B cell (primary cell): ENCODE measurements at regions of chr15 and their contacts with region 1.

Region 1: GRCh38 chr15:45166834-45167630 is 20.7 kb downstream of the SHF start:
- DNase-seq: peak; percentile 89
- ATAC-seq: peak; percentile 94
- H3K4me3 ChIP-seq: peak overlapping the region; percentile 45 to 84 (median 81)
- H3K4me3 Mint-ChIP-seq: peak overlapping the region; percentile 80
- H3K27ac ChIP-seq: peak overlapping the region; percentile 89 to 96
- H3K27ac Mint-ChIP-seq: peak overlapping the region; percentile 92
- H3K4me1 ChIP-seq: peaks cover 12 to 46% of the 10 kb centered on the region in 2 donors
- H3K4me1 Mint-ChIP-seq: peaks cover 31% of the 10 kb centered on the region
- H3K27me3 ChIP-seq: no peaks in the 10 kb centered on the region
- H3K27me3 Mint-ChIP-seq: no peaks in the 10 kb centered on the region
- CTCF ChIP-seq: peak; percentile 75

Region 2: GRCh38 chr15:44910981-44911625 is 255.9 kb before region 1 on chr15:
- CTCF ChIA-PET with region 1: no interaction called
- POLR2A ChIA-PET with region 1: no interaction called
- intact Hi-C with region 1: no loop called
- DNase-seq: no peak
- ATAC-seq: no peak
- H3K4me3 ChIP-seq: no peak overlapping the region
- H3K4me3 Mint-ChIP-seq: no peak overlapping the region
- H3K27ac ChIP-seq: no peak overlapping the region
- H3K27ac Mint-ChIP-seq: no peak overlapping the region
- H3K4me1 ChIP-seq: no peaks in the 10 kb centered on the region
- H3K4me1 Mint-ChIP-seq: no peaks in the 10 kb centered on the region
- H3K27me3 ChIP-seq: no peaks in the 10 kb centered on the region
- H3K27me3 Mint-ChIP-seq: no peaks in the 10 kb centered on the region
- CTCF ChIP-seq: no peak

Region 3: GRCh38 chr15:45118131-45118588 is 48.9 kb before region 1 on chr15:
- CTCF ChIA-PET with region 1: interaction called, 7 read pairs
- POLR2A ChIA-PET with region 1: no interaction called
- intact Hi-C with region 1: loop called (anchors 2 kb)
- DNase-seq: peak; percentile 92
- ATAC-seq: peak; percentile 98
- H3K4me3 ChIP-seq: peak overlapping the region in 3 of 5 experiments; percentile 36 to 60 (median 44)
- H3K4me3 Mint-ChIP-seq: peak overlapping the region; percentile 80
- H3K27ac ChIP-seq: no peak overlapping the region
- H3K27ac Mint-ChIP-seq: no peak overlapping the region
- H3K4me1 ChIP-seq: peaks cover 38 to 45% of the 10 kb centered on the region in 2 donors
- H3K4me1 Mint-ChIP-seq: peaks cover 36% of the 10 kb centered on the region
- H3K27me3 ChIP-seq: peaks cover 0 to 70% (median 47%) of the 10 kb centered on the region in 4 experiments
- H3K27me3 Mint-ChIP-seq: peaks cover 69% of the 10 kb centered on the region
- CTCF ChIP-seq: peak; percentile 100

Region 4: DNA sequence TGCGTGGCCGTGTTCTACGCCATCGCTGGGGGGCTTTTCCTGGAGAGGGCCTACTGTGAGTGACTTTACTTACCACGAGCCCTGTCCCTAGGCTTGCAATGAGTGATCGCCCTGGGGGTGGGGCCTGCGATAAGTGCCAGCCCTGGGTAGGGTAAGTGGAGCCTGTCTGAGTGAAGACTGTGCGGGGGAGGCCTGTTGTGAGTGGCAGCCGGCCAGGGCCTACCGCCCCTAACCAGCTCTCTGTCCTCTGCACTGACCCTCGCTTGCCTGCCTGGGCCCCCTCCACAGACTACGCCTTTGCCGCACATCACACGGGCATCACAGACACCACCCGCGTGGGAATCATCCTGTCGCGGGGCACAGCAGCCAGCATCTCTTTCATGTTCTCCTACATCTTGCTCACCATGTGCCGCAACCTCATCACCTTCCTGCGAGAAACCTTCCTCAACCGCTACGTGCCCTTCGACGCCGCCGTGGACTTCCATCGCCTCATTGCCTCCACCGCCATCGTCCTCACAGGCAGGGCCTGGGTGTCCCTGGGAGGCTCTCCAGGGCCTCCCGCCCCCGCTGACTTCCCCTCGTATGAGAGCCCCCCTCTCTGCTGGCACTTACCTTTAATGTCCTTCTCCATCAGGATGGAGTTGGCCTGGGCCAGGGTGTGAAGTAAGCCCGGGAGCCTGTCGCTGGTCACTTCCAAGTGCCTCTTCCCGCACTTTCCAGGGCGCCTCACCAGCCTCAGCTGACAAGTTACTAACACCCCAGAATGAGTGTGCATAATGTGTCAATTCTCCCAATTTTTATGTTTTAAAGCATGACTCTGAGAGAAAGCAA is 14.8 kb before region 1 on chr15:
- CTCF ChIA-PET with region 1: interaction called, 4 read pairs
- POLR2A ChIA-PET with region 1: interaction called, 11 read pairs
- intact Hi-C with region 1: no loop called
- DNase-seq: no peak
- ATAC-seq: no peak
- H3K4me3 ChIP-seq: no peak overlapping the region
- H3K4me3 Mint-ChIP-seq: no peak overlapping the region
- H3K27ac ChIP-seq: no peak overlapping the region
- H3K27ac Mint-ChIP-seq: no peak overlapping the region
- H3K4me1 ChIP-seq: no peaks in the 10 kb centered on the region
- H3K4me1 Mint-ChIP-seq: no peaks in the 10 kb centered on the region
- H3K27me3 ChIP-seq: no peaks in the 10 kb centered on the region
- H3K27me3 Mint-ChIP-seq: no peaks in the 10 kb centered on the region
- CTCF ChIP-seq: no peak

Region 5: GRCh38 chr15:45187894-45188830 is 21.1 kb after region 1 on chr15 and contains the start of gene SHF:
- CTCF ChIA-PET with region 1: interaction called, 8 read pairs
- POLR2A ChIA-PET with region 1: interaction called, 4 read pairs
- intact Hi-C with region 1: loop called (anchors 1 kb)
- DNase-seq: peak; percentile 87
- ATAC-seq: peak; percentile 79
- H3K4me3 ChIP-seq: peak within 1 kb of the TSS; percentile 32 to 98 (median 77)
- H3K4me3 Mint-ChIP-seq: peak within 1 kb of the TSS; percentile 91
- H3K27ac ChIP-seq: peak within 1 kb of the TSS; percentile 73 to 77
- H3K27ac Mint-ChIP-seq: peak within 1 kb of the TSS; percentile 78
- H3K4me1 ChIP-seq: peaks cover 0 to 15% of the 10 kb centered on the region in 2 donors
- H3K4me1 Mint-ChIP-seq: peaks cover 20% of the 10 kb centered on the region
- H3K27me3 ChIP-seq: no peaks in the 10 kb centered on the region
- H3K27me3 Mint-ChIP-seq: peaks cover 7% of the 10 kb centered on the region
- CTCF ChIP-seq: no peak
- total RNA-seq, gene SHF: 15.4 and 16.9 TPM in 2 replicates

Region 6: DNA sequence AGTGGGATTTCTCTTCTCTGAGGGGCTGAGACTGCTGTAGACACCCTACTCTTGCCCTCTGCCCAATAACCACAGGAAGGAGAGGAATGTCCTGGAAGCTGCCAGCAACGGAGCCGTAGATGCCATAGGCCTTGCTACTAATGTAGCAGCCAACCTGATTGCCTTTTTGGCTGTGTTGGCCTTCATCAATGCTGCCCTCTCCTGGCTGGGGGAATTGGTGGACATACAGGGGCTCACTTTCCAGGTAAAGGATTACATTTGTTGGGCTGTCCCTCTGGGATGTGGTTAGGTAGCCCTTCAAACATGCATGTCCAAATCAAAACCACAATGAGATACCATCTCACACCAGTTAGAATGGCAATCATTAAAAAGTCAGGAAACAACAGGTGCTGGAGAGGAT is 101.1 kb after region 1 on chr15:
- CTCF ChIA-PET with region 1: interaction called, 8 read pairs
- POLR2A ChIA-PET with region 1: no interaction called
- intact Hi-C with region 1: loop called (anchors 2 kb)
- DNase-seq: peak; percentile 22
- ATAC-seq: no peak
- H3K4me3 ChIP-seq: no peak overlapping the region
- H3K4me3 Mint-ChIP-seq: no peak overlapping the region
- H3K27ac ChIP-seq: no peak overlapping the region
- H3K27ac Mint-ChIP-seq: no peak overlapping the region
- H3K4me1 ChIP-seq: no peaks in the 10 kb centered on the region
- H3K4me1 Mint-ChIP-seq: no peaks in the 10 kb centered on the region
- H3K27me3 ChIP-seq: no peaks in the 10 kb centered on the region
- H3K27me3 Mint-ChIP-seq: peaks cover 16% of the 10 kb centered on the region
- CTCF ChIP-seq: no peak

Region 7: GRCh38 chr15:45378149-45378912 is 211.3 kb after region 1 on chr15 and contains the start of gene GATM:
- CTCF ChIA-PET with region 1: interaction called, 5 read pairs
- POLR2A ChIA-PET with region 1: no interaction called
- intact Hi-C with region 1: loop called (anchors 1 kb)
- DNase-seq: peak; percentile 85
- ATAC-seq: peak; percentile 86
- H3K4me3 ChIP-seq: peak within 1 kb of the TSS; percentile 38 to 86 (median 72)
- H3K4me3 Mint-ChIP-seq: peak within 1 kb of the TSS; percentile 90
- H3K27ac ChIP-seq: peak within 1 kb of the TSS; percentile 51 to 63
- H3K27ac Mint-ChIP-seq: peak within 1 kb of the TSS; percentile 89
- H3K4me1 ChIP-seq: peaks cover 9 to 25% of the 10 kb centered on the region in 2 donors
- H3K4me1 Mint-ChIP-seq: peaks cover 20% of the 10 kb centered on the region
- H3K27me3 ChIP-seq: peaks cover 0 to 20% (median 2%) of the 10 kb centered on the region in 4 experiments
- H3K27me3 Mint-ChIP-seq: peaks cover 3% of the 10 kb centered on the region
- CTCF ChIP-seq: peak; percentile 23
- total RNA-seq, gene GATM: 16.6 and 18.2 TPM in 2 replicates